Heart left ventricle (tissue), 16 donors: ENCODE measurements at regions of chr11 and their contacts with region 1.

Region 1: GRCh38 chr11:12029738-12030363 is 21.4 kb upstream of the DKK3 start:
- DNase-seq: no peak
- ATAC-seq: no peak
- H3K4me3 ChIP-seq: no peak overlapping the region
- H3K27ac ChIP-seq: no peak overlapping the region
- H3K4me1 ChIP-seq: peaks cover 0 to 28% (median 2%) of the 10 kb centered on the region in 12 donors
- H3K27me3 ChIP-seq: no peaks in the 10 kb centered on the region
- CTCF ChIP-seq: no peak
- POLR2A ChIP-seq: no peak

Region 2: DNA sequence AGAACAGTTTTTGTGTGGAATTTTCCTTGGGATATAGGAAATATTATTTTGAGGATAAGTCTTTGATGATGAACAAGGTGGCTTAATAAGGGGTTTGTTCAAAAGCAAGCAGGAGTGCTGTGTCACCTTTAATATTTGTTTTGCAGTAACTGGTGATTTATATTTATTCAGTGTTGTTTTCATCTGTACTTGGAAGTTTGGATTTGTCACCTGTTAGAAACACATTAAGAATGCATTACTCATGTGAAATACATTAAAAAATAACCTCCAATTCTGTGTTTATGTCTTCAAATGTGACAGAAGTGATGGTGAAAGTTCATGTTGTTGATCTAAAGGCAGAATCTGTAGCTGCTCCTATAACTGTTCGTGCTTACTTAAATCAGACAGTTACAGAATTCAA is 91.9 kb before region 1 on chr11:
- intact Hi-C with region 1: loop called in 1 of 10 experiments (anchors 5 kb)
- DNase-seq: no peak
- ATAC-seq: no peak
- H3K4me3 ChIP-seq: no peak overlapping the region
- H3K27ac ChIP-seq: no peak overlapping the region
- H3K4me1 ChIP-seq: peaks cover 0 to 10% (median 0%) of the 10 kb centered on the region in 12 donors
- H3K27me3 ChIP-seq: no peaks in the 10 kb centered on the region
- CTCF ChIP-seq: no peak
- POLR2A ChIP-seq: no peak

Region 3: GRCh38 chr11:11966826-11967668 is 62.8 kb before region 1 on chr11:
- intact Hi-C with region 1: loop called in 1 of 10 experiments (anchors 5 kb)
- DNase-seq: peak; percentile 70 to 89 (median 87)
- ATAC-seq: peak in 3 of 4 donors; percentile 63 to 73 (median 73)
- H3K4me3 ChIP-seq: no peak overlapping the region
- H3K27ac ChIP-seq: peak overlapping the region in 1 of 12 donors; percentile 62
- H3K4me1 ChIP-seq: peaks cover 0 to 94% (median 42%) of the 10 kb centered on the region in 12 donors
- H3K27me3 ChIP-seq: no peaks in the 10 kb centered on the region
- CTCF ChIP-seq: peak; percentile 69 to 89 (median 78)
- POLR2A ChIP-seq: no peak

Region 4: DNA sequence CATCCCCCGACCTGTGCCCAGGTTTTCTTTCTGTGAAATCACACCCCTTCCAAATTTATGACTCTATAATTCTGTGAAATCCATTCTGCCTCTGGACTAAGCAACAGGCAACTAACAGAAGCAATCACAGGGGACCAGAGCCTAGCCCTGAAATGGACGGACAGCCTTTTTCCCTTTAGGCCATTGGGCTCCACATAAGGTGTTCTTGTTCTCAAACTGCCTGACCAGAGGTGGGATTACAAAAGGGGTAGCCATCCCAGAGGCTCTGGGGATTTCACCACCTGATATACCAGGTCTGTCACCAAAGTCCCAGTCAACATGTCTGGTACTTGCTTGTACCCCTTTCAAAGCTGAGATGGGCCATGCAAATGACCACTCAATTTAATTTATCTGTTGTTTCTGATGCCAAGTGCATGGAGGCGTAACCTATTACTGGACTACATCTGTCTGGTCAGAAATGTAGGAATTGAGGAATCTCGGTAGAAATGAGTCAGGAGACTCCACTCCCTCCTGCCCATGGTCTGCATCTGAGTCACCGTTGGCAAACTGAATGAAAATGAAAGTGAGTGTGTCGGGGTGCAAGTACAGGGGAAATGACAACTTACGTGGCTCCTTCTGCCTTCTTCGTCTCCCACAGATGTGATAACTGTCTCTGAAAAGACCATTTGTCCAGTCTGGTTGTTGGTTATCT is 31.6 kb before region 1 on chr11:
- intact Hi-C with region 1: no loop called
- DNase-seq: no peak
- ATAC-seq: peak in 1 of 4 donors; percentile 12
- H3K4me3 ChIP-seq: no peak overlapping the region
- H3K27ac ChIP-seq: no peak overlapping the region
- H3K4me1 ChIP-seq: peaks cover 0 to 22% (median 9%) of the 10 kb centered on the region in 12 donors
- H3K27me3 ChIP-seq: no peaks in the 10 kb centered on the region
- CTCF ChIP-seq: no peak
- POLR2A ChIP-seq: no peak

Region 5: DNA sequence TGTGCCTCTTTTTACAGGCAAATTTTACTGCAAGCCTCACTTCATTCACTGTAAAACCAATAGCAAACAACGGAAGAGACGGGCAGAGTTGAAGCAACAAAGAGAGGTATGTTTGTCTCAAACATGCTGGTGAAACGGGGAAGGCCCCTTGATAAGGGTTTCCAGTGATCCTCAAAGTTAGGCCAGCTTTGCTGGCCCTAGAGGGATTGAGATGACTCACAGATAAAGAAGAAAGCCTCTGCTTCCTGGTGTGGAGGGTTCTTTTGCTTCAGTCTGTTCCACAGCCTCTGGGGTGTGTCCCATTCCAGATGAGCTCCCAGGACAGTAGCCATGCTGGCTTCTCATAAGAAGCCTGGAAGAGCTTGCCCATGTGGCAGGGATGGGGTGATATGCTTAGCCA is 228.6 kb after region 1 on chr11:
- intact Hi-C with region 1: no loop called
- DNase-seq: no peak
- ATAC-seq: no peak
- H3K4me3 ChIP-seq: no peak overlapping the region
- H3K27ac ChIP-seq: no peak overlapping the region
- H3K4me1 ChIP-seq: peaks cover 0 to 31% (median 12%) of the 10 kb centered on the region in 12 donors
- H3K27me3 ChIP-seq: no peaks in the 10 kb centered on the region
- CTCF ChIP-seq: no peak
- POLR2A ChIP-seq: no peak

Region 6: DNA sequence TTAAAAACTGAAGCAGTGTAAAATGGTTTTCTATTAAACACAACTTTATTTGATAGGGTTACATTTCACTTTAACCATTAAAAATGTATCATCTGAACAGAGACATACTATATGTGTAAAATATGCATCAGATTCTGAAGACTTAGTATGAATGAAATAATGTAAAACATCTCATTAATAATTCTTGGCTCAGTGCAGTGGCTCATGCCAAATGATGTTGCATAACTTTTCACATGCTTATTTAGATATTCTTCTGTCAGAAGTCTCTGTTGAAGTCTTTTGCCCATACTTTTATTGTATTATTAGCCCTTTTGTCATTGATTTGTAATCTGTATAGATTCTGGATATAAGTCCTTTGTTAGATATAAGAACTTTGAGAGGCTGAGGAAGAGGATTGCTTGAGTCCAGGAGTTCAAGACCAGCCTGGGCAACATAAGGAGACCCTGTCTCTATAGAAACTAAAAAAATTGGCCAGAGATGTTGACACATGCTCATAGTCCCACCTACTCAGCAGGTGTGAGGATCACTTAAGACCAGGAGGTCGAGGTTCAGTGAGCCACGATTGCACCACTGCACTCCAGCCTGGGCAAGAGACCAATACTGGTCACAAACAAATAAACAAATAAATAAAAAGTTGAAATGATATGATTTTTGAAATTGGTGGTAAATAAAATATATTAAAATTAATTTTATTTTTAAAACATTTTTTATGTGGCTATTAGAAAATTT is 273.7 kb after region 1 on chr11:
- intact Hi-C with region 1: no loop called
- DNase-seq: no peak
- ATAC-seq: no peak
- H3K4me3 ChIP-seq: no peak overlapping the region
- H3K27ac ChIP-seq: no peak overlapping the region
- H3K4me1 ChIP-seq: no peaks in the 10 kb centered on the region
- H3K27me3 ChIP-seq: no peaks in the 10 kb centered on the region
- CTCF ChIP-seq: no peak
- POLR2A ChIP-seq: no peak